ENCODE measurements at regions of chr18 and their contacts with region 1.

Region 1: DNA sequence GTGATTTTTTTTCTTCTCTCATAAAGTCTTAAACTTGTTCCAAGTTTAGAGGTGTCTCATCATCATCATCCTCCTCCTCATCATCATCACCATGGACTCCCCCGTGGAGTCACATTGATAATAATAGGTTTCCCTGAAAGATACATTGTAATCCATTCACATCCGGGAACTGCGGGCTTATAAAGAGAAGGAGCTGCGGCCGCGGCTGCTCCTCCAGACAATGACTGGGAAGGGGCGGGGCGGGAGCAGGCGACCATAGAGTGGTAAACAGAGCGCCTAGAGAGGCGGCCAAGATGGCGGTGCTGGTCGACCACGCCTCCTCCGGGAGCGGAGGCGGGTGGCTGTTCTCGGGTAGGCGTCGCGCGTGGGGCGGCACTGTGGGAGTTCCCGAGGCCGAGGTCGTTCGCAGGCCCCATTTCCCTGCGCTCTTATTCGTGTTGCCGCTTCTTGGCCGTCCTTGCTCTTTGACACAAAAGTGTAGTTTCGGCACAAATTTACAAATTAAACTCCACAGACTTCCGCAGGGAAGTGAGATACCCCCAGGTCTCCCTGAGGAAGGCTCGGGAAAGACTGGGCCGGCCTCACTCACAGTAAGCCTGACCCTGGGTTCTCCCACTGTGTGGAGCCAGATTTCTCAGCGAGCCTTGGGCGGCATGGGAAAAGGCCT is 1.8 kb upstream of the TCF4 start:
- DNase-seq: peak; percentile 98
- ATAC-seq: peak; percentile 99
- H3K4me3 ChIP-seq: peak overlapping the region; percentile 74
- H3K27ac ChIP-seq: peak overlapping the region; percentile 86
- H3K4me1 ChIP-seq: peaks cover 6% of the 10 kb centered on the region
- H3K27me3 ChIP-seq: no peaks in the 10 kb centered on the region
- CTCF ChIP-seq: no peak

Region 2: GRCh38 chr18:55779691-55780585 is 190.2 kb after region 1 on chr18:
- intact Hi-C with region 1: loop called (anchors 10 kb)
- DNase-seq: peak; percentile 49
- ATAC-seq: peak; percentile 65 to 70
- H3K4me3 ChIP-seq: peak overlapping the region; percentile 69
- H3K27ac ChIP-seq: peak overlapping the region; percentile 76
- H3K4me1 ChIP-seq: peaks cover 16% of the 10 kb centered on the region
- H3K27me3 ChIP-seq: no peaks in the 10 kb centered on the region
- CTCF ChIP-seq: peak; percentile 28

Region 3: GRCh38 chr18:55968550-55968949 is 378.8 kb after region 1 on chr18:
- intact Hi-C with region 1: no loop called
- DNase-seq: no peak
- ATAC-seq: no peak
- H3K4me3 ChIP-seq: no peak overlapping the region
- H3K27ac ChIP-seq: no peak overlapping the region
- H3K4me1 ChIP-seq: no peaks in the 10 kb centered on the region
- H3K27me3 ChIP-seq: no peaks in the 10 kb centered on the region
- CTCF ChIP-seq: no peak

Measured in lower lobe of right lung (tissue), 2 donors.